ENCODE measurements at regions of chr11 and their contacts with region 1.

Region 1: GRCh38 chr11:48154151-48154550 is 62.5 kb upstream of the OR4B1 start:
- DNase-seq: peak; percentile 49
- H3K4me3 ChIP-seq: no peak overlapping the region
- H3K27ac ChIP-seq: no peak overlapping the region
- H3K4me1 ChIP-seq: no peaks in the 10 kb centered on the region
- H3K27me3 ChIP-seq: no peaks in the 10 kb centered on the region
- CTCF ChIP-seq: no peak

Region 2: DNA sequence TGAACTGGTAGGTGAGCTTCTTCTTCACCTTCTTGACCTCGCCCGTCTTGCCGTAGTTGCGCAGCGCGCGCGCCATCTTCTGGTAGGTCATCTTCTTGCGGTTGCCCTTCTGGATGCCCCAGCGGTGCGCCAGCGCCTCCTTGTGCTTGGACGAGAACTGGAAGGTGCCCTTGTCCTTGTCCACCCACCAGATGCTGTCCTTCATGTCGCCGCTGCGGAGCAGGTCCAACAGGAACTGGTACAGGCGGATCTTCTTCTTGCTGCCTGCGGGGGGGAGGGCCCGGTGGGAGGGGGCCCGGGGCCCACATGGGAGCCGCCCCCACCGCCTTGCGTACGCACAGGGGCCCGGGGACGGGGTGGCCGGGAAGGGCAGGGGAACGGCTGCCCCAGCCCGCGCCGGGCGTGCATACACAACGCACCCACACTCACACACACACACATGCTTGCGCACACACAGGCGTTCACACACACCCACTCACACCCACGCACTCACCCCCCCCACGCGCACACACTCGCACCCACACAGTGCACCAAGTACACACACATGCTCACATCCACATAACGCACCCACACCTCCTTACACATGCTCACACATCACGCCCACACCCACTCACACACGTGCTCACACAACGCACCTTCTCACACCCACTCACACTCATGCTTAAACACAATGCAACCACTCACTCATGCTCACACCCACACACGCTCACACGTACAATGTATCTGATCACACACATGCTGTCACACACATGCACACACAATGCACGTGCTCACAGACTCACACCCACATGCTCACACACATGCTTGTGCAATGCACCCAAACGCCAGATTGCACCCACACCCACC is 798.6 kb before region 1 on chr11:
- CTCF ChIA-PET with region 1: no interaction called
- POLR2A ChIA-PET with region 1: no interaction called
- intact Hi-C with region 1: no loop called
- DNase-seq: peak; percentile 99
- H3K4me3 ChIP-seq: peak overlapping the region; percentile 50
- H3K27ac ChIP-seq: peak overlapping the region; percentile 18
- H3K4me1 ChIP-seq: peaks cover 5% of the 10 kb centered on the region
- H3K27me3 ChIP-seq: no peaks in the 10 kb centered on the region
- CTCF ChIP-seq: peak; percentile 100

Region 3: DNA sequence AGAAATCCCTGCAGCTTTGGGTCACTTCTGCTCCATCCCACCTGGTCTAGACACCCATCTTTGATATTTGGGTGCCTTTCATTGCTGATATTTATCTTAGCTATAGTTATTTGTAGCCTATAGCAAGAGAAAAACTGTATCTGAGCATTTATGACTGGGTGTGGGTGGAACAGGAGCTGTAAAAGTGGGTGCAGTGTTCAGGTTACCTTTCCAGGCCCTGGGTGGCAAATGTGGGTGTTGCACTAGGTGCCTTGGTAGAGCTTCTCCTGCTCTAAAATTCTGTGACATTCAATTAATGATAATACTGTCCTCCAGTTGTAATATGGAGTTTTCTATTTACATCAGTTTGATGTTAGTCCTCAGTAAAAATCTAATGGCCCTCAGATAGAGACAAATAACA is 15.9 kb before region 1 on chr11:
- CTCF ChIA-PET with region 1: no interaction called
- POLR2A ChIA-PET with region 1: no interaction called
- intact Hi-C with region 1: loop called (anchors 2 kb)
- DNase-seq: no peak
- H3K4me3 ChIP-seq: no peak overlapping the region
- H3K27ac ChIP-seq: no peak overlapping the region
- H3K4me1 ChIP-seq: no peaks in the 10 kb centered on the region
- H3K27me3 ChIP-seq: no peaks in the 10 kb centered on the region
- CTCF ChIP-seq: no peak

Region 4: DNA sequence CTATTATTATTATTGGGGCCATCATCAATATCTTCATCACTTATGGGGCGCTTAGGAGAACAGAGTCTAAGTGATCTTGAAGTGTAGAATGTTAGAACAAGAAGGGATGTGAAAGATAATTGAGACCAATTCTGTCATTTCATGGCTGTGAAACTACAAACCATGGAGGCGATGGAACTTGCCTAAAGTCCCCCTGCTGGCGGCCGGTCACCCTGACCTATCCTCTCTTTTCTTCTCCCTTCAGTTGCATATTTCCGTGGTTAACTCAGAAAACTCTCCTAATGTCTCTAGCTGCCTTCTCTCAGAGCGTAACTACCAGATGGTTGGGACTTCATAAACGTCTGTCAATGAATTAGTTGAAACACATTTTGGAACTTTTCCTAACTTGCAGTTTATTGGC is 55.9 kb after region 1 on chr11:
- CTCF ChIA-PET with region 1: no interaction called
- POLR2A ChIA-PET with region 1: no interaction called
- intact Hi-C with region 1: loop called (anchors 5 kb)
- DNase-seq: peak; percentile 21
- H3K4me3 ChIP-seq: no peak overlapping the region
- H3K27ac ChIP-seq: no peak overlapping the region
- H3K4me1 ChIP-seq: no peaks in the 10 kb centered on the region
- H3K27me3 ChIP-seq: peaks cover 28% of the 10 kb centered on the region
- CTCF ChIP-seq: peak; percentile 22; the same call in 1 of the 2 replicates